Activated B cell treated with CpG ODN at 0.5 μM for 24 hours (primary cell): ENCODE measurements at regions of chr2 and their contacts with region 1.

Region 1: DNA sequence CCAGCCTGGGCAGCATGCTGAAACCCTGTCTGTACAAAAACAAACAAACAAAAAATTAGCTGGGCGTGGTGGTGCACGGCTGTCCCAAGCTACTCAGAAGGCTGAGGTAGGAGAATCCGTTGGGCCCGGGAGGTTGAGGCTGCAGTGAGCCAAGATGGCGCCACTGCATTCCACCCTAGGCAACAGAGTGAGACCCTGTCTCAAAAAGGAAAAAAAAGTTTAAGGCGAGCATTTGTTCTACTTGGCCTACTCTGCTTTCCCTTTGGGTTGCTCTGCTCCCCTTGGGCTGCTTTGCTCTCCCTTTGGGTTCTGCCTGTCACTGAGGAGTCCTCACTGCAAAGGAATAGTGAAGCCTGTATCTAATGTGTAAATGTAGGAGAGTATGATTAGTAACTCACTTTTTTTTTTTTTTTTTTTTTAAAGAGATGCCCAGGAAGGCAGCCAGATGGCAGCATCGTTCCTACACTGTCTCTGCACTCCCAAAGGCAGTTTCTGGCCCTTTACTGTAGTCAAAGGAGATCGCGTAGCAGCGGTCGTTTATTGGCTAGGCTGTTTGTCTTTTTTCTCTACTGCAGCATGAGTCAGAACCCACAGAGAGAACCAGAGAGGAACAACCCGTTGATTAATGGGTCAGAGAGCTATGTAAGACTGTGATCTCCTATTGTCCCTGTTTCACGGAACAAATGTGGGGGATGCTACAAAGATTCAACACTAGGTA is 118.3 kb upstream of the CWC22 start:
- DNase-seq: no peak
- ATAC-seq: peak; percentile 99
- H3K4me3 Mint-ChIP-seq: no peak overlapping the region
- H3K27ac Mint-ChIP-seq: no peak overlapping the region
- H3K4me1 Mint-ChIP-seq: no peaks in the 10 kb centered on the region
- H3K27me3 Mint-ChIP-seq: peaks cover 3% of the 10 kb centered on the region
- CTCF ChIP-seq: no peak

Region 2: DNA sequence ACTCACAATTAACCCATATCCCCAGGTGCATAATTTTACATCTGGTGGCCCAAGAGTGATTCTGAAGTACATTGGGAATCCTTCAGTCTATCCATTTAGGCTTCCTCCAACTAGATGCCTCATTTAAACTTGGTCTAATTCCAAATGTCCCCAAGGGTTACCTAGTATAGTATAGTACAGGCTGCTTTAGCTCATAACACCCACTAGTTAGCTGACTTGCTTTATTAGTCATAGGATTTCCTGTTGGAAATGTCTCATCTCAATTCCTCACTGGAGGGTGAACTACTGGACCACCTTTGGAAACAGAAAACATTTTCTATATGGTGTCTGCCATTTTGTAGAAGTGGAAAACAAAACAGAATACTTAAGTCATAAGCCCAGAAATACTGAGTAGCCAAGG is 658.3 kb before region 1 on chr2:
- CTCF ChIA-PET with region 1: no interaction called
- POLR2A ChIA-PET with region 1: no interaction called
- intact Hi-C with region 1: no loop called
- DNase-seq: no peak
- ATAC-seq: no peak
- H3K4me3 Mint-ChIP-seq: no peak overlapping the region
- H3K27ac Mint-ChIP-seq: no peak overlapping the region
- H3K4me1 Mint-ChIP-seq: no peaks in the 10 kb centered on the region
- H3K27me3 Mint-ChIP-seq: peaks cover 5% of the 10 kb centered on the region
- CTCF ChIP-seq: no peak

Region 3: DNA sequence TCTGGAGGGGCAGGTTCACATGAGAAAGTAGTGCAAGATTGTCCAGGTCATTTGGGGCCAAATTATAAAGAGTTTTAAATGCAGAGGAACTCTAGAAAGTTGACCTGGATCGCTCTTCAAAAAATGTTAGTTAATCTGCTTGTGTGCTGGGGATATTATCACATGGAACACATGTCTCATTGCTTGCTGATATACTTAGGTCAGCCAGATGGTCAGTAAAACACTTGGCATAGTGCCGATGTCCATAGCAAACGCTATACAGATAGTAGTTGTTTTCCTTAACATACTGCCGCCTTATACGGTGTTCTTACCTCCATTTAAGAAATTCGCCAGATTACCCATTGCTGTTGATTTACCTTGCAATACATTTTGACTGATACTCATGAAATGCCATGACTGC is 14.9 kb before region 1 on chr2:
- CTCF ChIA-PET with region 1: interaction called, 13 read pairs
- POLR2A ChIA-PET with region 1: no interaction called
- intact Hi-C with region 1: no loop called
- DNase-seq: no peak
- ATAC-seq: no peak
- H3K4me3 Mint-ChIP-seq: no peak overlapping the region
- H3K27ac Mint-ChIP-seq: no peak overlapping the region
- H3K4me1 Mint-ChIP-seq: no peaks in the 10 kb centered on the region
- H3K27me3 Mint-ChIP-seq: peaks cover 11% of the 10 kb centered on the region
- CTCF ChIP-seq: no peak

Region 4: DNA sequence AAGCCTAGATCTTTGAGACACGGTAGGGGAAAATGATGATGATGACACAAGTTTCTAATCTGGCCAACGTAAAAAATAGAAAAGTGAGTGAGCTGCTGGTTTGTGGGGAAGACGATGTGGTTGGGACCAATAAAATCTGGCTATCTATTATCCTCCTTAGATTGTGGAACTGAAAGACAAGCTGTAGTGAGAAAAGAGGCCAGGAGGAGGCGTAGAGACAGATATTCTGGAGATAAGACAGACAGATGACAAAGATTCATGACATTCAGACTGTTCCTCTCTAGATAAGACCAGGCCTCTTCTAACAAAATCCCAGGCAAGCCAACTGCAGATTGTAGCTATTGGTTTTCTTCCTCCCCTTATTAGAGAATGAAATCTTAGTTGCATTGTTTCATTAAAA is 478.7 kb after region 1 on chr2:
- CTCF ChIA-PET with region 1: interaction called, 3 read pairs
- POLR2A ChIA-PET with region 1: no interaction called
- intact Hi-C with region 1: loop called (anchors 2 kb)
- DNase-seq: no peak
- ATAC-seq: no peak
- H3K4me3 Mint-ChIP-seq: no peak overlapping the region
- H3K27ac Mint-ChIP-seq: no peak overlapping the region
- H3K4me1 Mint-ChIP-seq: no peaks in the 10 kb centered on the region
- H3K27me3 Mint-ChIP-seq: no peaks in the 10 kb centered on the region
- CTCF ChIP-seq: no peak

Region 5: GRCh38 chr2:181058378-181059269 is 933.2 kb after region 1 on chr2:
- CTCF ChIA-PET with region 1: interaction called, 117 read pairs
- POLR2A ChIA-PET with region 1: no interaction called
- intact Hi-C with region 1: loop called (anchors 1 kb)
- DNase-seq: no peak
- ATAC-seq: peak; percentile 56
- H3K4me3 Mint-ChIP-seq: no peak overlapping the region
- H3K27ac Mint-ChIP-seq: no peak overlapping the region
- H3K4me1 Mint-ChIP-seq: peaks cover 3% of the 10 kb centered on the region
- H3K27me3 Mint-ChIP-seq: no peaks in the 10 kb centered on the region
- CTCF ChIP-seq: peak; percentile 90

Region 6: GRCh38 chr2:181715033-181715630 is 1589.7 kb after region 1 on chr2:
- CTCF ChIA-PET with region 1: interaction called, 12 read pairs
- POLR2A ChIA-PET with region 1: no interaction called
- intact Hi-C with region 1: loop called (anchors 1 kb)
- DNase-seq: peak; percentile 26
- ATAC-seq: peak; percentile 71
- H3K4me3 Mint-ChIP-seq: no peak overlapping the region
- H3K27ac Mint-ChIP-seq: no peak overlapping the region
- H3K4me1 Mint-ChIP-seq: no peaks in the 10 kb centered on the region
- H3K27me3 Mint-ChIP-seq: no peaks in the 10 kb centered on the region
- CTCF ChIP-seq: no peak

Region 7: GRCh38 chr2:182077451-182078142 is 1952.2 kb after region 1 on chr2:
- CTCF ChIA-PET with region 1: no interaction called
- POLR2A ChIA-PET with region 1: no interaction called
- intact Hi-C with region 1: loop called (anchors 2 kb)
- DNase-seq: no peak
- ATAC-seq: peak; percentile 25
- H3K4me3 Mint-ChIP-seq: no peak overlapping the region
- H3K27ac Mint-ChIP-seq: no peak overlapping the region
- H3K4me1 Mint-ChIP-seq: no peaks in the 10 kb centered on the region
- H3K27me3 Mint-ChIP-seq: peaks cover 3% of the 10 kb centered on the region
- CTCF ChIP-seq: no peak